AG04449 (cell line): ENCODE measurements at regions of chr12 and their contacts with region 1.

Region 1: GRCh38 chr12:42372154-42372791 is 46.3 kb downstream of the PPHLN1 start:
- DNase-seq: peak; percentile 4
- H3K4me3 ChIP-seq: no peak overlapping the region
- CTCF ChIP-seq: peak; percentile 67

Region 2: DNA sequence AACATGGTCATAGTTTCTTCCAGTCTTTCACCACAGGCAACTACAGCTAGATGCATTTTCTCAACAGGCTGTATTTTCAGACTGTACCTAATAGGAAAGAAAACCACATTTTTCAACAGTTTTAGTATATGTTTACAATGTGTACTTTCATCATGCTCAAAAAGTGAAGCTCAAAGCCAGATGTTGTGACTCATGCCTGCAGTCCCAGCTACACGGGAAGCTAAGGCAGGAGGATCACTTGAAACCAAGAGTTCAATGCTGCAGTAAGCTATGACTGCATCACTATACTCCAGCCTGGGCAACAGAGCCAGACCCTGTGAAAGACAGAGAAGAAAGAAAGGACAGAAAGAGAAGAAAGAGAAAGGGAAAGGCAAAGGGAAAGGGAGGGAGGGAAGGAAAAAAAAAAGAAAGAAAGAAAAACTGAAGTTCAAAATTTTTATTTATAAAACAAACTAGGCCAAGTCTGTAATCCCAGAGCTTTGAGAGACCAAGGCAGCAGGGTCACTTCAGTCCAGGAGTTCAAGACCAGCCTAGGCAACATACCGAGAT is 253.1 kb before region 1 on chr12:
- CTCF ChIA-PET with region 1: interaction called, 14 read pairs
- POLR2A ChIA-PET with region 1: no interaction called
- DNase-seq: peak; percentile 62
- H3K4me3 ChIP-seq: no peak overlapping the region
- CTCF ChIP-seq: no peak

Region 3: DNA sequence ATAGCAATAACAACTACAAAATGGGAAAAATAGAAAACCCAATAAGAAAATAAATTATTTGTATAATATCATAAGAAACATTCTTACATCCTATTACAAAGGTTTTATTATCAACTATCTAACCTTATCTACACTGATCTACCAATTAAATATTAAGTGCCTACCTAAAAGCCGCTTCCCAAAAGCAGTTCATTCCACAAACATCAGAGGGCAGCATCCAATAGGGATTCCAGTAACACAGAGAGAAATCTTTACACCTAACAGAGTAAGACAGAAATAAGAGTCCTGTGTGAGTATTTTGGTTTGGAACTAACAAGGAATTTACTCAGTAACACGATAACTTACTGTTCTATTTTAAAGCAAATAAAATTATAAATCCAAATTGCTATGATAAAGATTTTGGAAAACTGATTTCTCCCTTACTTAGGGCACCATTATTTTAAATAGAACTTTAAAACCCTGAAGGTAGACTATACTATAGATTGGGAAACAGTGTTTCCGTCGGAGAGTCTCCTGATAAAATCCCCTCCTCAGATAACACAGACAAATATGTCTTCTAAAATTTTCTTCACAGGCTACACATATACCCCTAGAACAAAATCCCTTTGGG is 242.6 kb before region 1 on chr12:
- CTCF ChIA-PET with region 1: interaction called, 56 read pairs
- POLR2A ChIA-PET with region 1: no interaction called
- DNase-seq: no peak
- H3K4me3 ChIP-seq: no peak overlapping the region
- CTCF ChIP-seq: peak; percentile 63

Region 4: DNA sequence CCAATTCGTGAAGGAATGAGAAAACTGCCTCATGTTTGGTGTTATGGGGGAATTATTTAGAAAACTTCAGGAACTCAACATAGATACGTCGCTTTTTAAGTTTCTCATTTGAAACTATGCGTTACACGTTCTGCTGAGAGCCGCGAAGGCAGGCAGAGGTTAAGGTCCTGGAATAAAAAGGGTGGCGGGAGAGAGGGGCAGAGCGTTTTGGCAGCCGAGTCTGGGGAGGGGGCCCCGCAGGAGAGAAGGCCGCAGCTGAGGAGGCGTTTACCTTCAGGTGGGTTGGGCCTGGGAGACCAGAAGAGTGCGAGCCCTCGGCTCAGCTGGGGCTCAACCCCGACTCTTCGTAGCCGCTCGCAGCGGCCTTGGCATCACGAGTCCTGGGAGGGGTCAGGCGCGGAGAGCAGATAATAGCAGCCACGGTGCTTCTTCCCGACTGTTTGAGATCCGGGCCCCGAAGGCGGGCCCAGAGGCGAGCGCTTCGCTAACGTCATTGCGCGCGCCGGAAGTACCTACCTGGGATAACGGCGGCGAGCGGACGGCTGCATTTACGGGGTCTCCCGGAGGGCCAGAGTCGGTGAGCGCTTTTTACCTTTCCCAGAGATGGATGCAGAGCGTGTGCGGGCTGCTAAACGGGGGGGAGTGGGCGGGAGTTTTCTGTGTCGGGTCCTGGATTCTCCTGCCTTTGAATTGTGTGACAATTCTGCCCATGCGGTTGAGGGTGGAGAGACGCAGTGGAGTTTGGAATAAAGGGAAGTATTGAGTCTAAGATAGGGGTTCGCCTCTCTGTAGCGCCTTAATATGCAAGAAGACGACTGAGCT is 46.4 kb before region 1 on chr12 and contains the starts of genes PPHLN1 and ZCRB1:
- CTCF ChIA-PET with region 1: no interaction called
- POLR2A ChIA-PET with region 1: no interaction called
- DNase-seq: no peak
- H3K4me3 ChIP-seq: peak within 1 kb of the TSS; percentile 68
- CTCF ChIP-seq: no peak

Region 5: DNA sequence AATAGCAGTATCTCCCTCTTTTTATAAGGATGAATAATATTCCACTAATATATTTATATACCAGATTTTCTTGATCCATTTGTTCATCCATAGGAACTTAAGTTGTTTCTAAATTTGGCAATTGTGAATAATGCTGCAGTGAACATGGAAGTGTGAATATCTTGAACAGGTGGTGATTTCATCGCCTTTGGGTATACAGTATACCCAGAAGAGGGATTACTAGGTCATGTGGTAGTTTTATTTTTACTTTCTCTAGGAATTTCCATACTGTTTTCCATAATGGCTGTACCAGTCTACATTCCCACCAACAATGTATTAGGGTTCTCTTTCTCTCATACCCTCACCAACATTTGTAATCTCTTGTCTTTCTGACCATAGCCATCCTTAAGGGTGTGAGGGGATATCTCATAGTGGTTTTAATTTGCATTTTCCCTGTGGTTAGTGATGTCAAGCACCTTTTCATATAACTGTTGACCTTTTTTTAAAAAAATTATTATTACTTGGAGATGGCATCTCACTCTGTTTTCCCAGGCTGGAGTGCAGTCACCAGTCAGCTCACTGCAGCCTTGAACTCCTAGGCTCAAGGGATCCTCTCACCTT is 25.8 kb before region 1 on chr12:
- CTCF ChIA-PET with region 1: interaction called, 13 read pairs
- POLR2A ChIA-PET with region 1: no interaction called
- DNase-seq: no peak
- H3K4me3 ChIP-seq: no peak overlapping the region
- CTCF ChIP-seq: no peak

Region 6: DNA sequence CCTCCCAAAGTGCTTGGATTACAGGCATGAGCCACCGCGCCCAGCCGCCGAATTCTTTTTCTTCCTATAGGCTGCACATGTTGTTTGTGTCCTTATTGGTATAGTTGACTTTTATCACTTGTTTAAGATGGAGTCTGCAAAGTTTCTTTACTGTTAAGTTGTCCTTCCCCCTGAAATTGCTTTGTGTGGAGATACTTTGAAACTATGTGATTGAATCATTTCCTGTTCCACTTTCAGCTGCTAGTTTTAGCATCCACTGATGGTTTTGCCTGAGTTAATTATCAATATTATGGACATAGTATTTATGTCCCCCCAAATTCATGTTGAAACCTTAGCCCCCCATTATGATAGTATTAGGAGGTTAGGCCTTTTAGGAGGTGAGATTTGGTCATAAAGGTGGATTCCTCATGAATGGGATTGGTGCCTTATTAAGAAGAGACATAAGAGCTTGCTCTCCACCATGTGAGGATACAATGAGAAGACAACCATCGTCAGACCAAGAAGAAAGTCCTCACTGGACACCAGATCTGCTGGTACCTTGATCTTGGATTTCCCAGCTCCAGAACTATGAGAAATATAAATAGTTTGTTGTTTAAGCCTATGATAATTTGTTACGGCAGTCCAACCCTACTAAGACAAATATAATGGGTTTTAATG is 11.4 kb before region 1 on chr12:
- CTCF ChIA-PET with region 1: interaction called, 24 read pairs
- POLR2A ChIA-PET with region 1: no interaction called
- DNase-seq: no peak
- H3K4me3 ChIP-seq: no peak overlapping the region
- CTCF ChIP-seq: no peak

Region 7: DNA sequence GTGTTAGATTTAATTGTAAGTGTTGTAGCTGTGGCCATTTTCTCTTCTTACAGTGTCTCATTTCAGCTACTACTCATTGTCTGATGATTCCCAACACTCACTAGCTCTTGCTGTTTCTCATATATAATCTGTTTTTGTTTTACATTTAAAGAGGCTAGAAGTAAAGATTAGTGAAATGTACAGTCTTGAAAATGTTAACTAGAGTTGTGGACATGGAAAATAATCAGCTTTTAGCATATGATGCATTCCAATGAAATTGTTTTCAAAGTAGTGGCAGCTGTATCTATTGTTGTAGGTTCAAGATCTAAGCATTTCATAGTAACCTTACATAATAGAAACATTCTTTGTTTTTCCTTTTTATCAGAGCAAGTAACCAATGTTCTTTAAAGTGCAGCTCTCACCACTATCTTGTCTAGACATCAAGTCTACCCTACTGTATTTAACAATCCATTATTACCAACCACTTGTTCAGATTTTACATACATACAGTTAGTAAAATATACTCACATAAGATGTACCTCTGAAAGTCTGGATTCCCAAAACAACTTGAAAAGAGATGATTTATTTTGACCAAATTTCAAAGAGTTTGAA is 30.6 kb after region 1 on chr12:
- CTCF ChIA-PET with region 1: interaction called, 22 read pairs
- POLR2A ChIA-PET with region 1: no interaction called
- DNase-seq: no peak
- H3K4me3 ChIP-seq: no peak overlapping the region
- CTCF ChIP-seq: no peak

Region 8: GRCh38 chr12:42552822-42553221 is 180.5 kb after region 1 on chr12:
- CTCF ChIA-PET with region 1: no interaction called
- POLR2A ChIA-PET with region 1: no interaction called
- DNase-seq: no peak
- H3K4me3 ChIP-seq: no peak overlapping the region
- CTCF ChIP-seq: no peak